ENCODE measurements at regions of chr14 and their contacts with region 1.

Region 1: GRCh38 chr14:21204167-21205025 is 48.5 kb upstream of the OR5AU1 start:
- DNase-seq: no peak
- H3K4me3 ChIP-seq: no peak overlapping the region
- H3K27ac ChIP-seq: no peak overlapping the region
- H3K4me1 ChIP-seq: no peaks in the 10 kb centered on the region
- H3K27me3 ChIP-seq: no peaks in the 10 kb centered on the region
- CTCF ChIP-seq: no peak

Region 2: DNA sequence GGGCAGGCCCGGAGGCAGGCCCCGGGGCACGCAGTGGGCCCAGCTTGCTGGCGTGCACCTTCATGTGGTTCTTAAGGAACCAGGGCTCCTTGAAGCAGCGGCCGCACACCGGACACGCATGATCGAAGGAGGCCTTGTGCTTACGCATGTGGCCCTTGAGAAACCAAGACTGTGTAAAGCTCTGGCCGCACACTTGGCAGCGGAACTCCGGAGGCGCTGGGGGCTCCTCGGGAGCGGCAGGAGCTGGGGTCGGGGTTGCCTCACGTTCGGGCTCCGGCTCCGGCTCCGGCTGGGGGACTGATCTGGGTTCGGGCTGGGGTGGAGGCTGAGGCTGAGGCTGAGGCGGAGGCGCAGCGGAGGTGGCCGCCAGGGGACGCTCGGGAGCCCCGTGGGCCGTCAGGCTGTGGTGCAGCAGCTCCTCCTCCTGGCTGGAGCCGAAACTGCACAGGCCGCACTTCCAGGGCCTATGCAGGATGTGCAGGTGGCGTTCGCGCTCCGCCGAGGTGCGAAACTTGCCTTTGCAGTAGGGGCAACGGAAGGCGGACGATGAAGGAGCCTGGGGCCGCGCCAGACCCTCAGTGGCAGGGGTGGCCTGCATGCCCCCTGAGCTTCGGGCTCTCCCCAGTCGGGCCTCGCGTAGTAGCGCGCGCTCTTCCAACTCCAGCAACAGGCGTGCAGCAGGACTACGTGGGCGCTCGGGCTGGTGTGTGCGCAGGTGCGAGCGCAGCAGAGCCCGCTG is 112.0 kb before region 1 on chr14:
- intact Hi-C with region 1: no loop called
- DNase-seq: peak; percentile 77 to 89
- H3K4me3 ChIP-seq: no peak overlapping the region
- H3K27ac ChIP-seq: peak overlapping the region; percentile 29 to 47
- H3K4me1 ChIP-seq: peaks cover 0 to 26% (median 20%) of the 10 kb centered on the region in 4 donors
- H3K27me3 ChIP-seq: no peaks in the 10 kb centered on the region
- CTCF ChIP-seq: peak; percentile 100

Region 3: GRCh38 chr14:21241218-21241819 is 36.9 kb after region 1 on chr14:
- intact Hi-C with region 1: loop called (anchors 5 kb)
- DNase-seq: no peak
- H3K4me3 ChIP-seq: no peak overlapping the region
- H3K27ac ChIP-seq: no peak overlapping the region
- H3K4me1 ChIP-seq: peaks cover 0 to 65% (median 34%) of the 10 kb centered on the region in 4 donors
- H3K27me3 ChIP-seq: no peaks in the 10 kb centered on the region
- CTCF ChIP-seq: peak in 1 of 2 experiments; percentile 25

Region 4: GRCh38 chr14:21437063-21437901 is 232.9 kb after region 1 on chr14:
- intact Hi-C with region 1: no loop called
- DNase-seq: peak; percentile 99
- H3K4me3 ChIP-seq: peak overlapping the region; percentile 81 to 97
- H3K27ac ChIP-seq: peak overlapping the region; percentile 87 to 94
- H3K4me1 ChIP-seq: peaks cover 0 to 30% (median 18%) of the 10 kb centered on the region in 4 donors
- H3K27me3 ChIP-seq: no peaks in the 10 kb centered on the region
- CTCF ChIP-seq: peak in 1 of 2 experiments; percentile 11

Region 5: GRCh38 chr14:21510735-21511657 is 306.6 kb after region 1 on chr14 and contains the start of gene METTL3:
- intact Hi-C with region 1: no loop called
- DNase-seq: peak; percentile 99
- H3K4me3 ChIP-seq: peak within 1 kb of the TSS; percentile 65 to 74
- H3K27ac ChIP-seq: peak within 1 kb of the TSS; percentile 71 to 85
- H3K4me1 ChIP-seq: peaks cover 0 to 21% (median 15%) of the 10 kb centered on the region in 4 donors
- H3K27me3 ChIP-seq: no peaks in the 10 kb centered on the region
- CTCF ChIP-seq: no peak

Measured in tibial artery (tissue), 4 donors.